ENCODE measurements at regions of chr2 and their contacts with region 1.

Region 1: DNA sequence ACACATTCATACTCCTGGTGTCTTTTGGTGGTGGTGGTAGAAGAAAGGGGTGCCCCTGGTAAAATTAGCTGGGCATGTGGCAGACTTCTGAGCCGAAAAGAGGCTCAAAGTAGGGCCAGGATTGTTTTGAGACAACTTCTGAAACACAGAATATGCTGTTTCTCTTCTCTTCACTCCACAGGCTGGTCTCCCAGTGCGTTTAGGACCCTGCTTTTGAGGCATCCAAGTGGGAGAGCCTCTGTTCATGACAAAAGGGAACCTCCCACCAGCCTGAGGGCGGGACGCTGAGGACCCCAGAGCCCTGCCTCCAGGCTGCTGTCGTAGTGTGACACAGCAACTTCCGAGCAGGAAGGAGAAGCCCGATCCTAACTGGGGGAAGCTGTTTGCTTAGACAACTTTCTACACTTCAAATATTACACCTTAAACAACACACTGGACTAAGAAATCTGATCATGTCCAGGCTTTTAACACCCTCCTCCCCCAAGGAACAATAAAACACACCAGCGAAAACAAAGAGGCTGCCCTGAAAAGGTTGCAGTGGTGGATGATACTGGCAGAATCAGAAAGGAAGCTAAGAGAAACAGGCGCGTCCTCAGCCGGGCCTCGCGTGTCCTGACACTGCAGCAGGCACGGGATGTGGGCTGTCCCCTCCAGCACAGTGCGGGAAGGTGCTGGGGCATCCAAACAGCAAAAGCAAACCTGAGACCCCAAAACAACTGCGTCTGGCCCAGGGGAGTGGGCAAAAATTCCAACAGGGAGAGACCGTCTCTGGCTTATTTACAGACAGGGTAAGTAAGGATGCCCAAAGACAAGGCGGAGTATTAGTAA is 9.3 kb downstream of the SERTAD2 start:
- H3K4me3 ChIP-seq: peak overlapping the region; percentile 33
- H3K27ac ChIP-seq: peak overlapping the region; percentile 86
- H3K4me1 ChIP-seq: peaks cover 41% of the 10 kb centered on the region
- CTCF ChIP-seq: no peak

Region 2: DNA sequence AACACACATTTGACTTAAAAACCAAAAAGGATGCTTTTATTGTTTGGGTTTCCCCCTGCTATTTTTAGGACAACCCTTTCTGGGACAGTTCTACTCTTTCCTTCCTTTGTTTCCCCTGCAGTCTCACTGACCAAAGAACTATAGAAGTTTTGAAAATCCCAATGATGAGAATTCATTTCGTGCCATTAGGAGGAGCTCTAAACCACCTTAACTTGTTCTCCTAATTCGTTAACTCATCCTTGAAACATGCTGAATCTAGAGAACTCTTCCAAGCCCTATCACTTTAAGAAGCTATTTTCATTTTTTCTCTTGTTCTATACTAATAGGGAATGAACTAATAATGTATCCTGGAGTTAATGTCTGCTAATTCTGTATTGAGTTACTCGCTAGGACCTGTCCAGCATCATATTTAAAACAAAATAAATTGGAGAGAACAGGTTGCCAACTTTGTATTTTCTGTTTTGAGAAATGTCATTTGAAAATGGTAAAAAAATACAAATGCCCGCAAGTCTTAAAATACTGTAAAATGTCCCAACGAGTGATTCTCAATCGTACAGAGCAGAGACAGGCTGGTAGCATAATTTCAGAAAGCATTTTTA is 57.4 kb before region 1 on chr2:
- CTCF ChIA-PET with region 1: interaction called, 24 read pairs
- POLR2A ChIA-PET with region 1: no interaction called
- H3K4me3 ChIP-seq: no peak overlapping the region
- H3K27ac ChIP-seq: no peak overlapping the region
- H3K4me1 ChIP-seq: no peaks in the 10 kb centered on the region
- CTCF ChIP-seq: no peak; the same call in 1 of the 2 replicates

Region 3: GRCh38 chr2:64685438-64685837 is 41.0 kb after region 1 on chr2:
- CTCF ChIA-PET with region 1: no interaction called
- POLR2A ChIA-PET with region 1: no interaction called
- H3K4me3 ChIP-seq: no peak overlapping the region
- H3K27ac ChIP-seq: no peak overlapping the region
- H3K4me1 ChIP-seq: no peaks in the 10 kb centered on the region
- CTCF ChIP-seq: no peak

Region 4: DNA sequence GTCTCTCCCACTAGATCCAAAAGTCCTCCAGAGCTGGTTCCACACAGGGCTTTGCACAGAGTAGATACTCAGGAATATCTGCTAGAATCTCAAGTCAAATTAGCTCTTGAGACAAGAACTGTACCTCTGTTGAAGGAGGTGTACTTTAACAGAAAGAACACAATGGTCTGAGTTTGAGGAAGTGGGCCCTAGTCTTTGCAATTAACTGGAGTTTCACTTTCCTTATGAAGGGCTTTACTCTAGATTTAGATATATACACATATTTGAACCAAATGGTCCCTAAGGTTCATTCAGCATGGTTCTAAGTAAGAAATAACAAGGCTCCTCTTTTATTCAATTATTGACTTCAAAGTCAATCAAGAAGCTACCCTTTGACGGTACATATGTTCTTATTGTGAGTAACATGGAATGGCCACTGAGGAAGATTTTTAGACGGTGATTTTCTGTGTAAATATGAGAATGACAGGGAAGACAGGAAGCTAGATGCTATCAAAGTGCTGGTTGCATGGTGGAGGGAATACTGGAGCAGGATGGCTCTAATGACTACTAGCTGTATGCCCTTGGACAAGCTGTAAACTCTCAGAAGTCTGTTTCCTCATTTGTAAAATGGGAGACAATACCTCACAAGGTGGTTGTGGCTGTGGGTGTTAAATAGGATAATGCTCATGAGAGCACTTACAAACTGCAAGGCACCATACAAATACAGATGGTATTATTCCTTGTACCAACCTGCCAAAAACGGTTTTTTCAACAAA is 82.8 kb after region 1 on chr2:
- CTCF ChIA-PET with region 1: interaction called, 14 read pairs
- POLR2A ChIA-PET with region 1: no interaction called
- H3K4me3 ChIP-seq: no peak overlapping the region
- H3K27ac ChIP-seq: no peak overlapping the region
- H3K4me1 ChIP-seq: peaks cover 23% of the 10 kb centered on the region
- CTCF ChIP-seq: no peak

Region 5: DNA sequence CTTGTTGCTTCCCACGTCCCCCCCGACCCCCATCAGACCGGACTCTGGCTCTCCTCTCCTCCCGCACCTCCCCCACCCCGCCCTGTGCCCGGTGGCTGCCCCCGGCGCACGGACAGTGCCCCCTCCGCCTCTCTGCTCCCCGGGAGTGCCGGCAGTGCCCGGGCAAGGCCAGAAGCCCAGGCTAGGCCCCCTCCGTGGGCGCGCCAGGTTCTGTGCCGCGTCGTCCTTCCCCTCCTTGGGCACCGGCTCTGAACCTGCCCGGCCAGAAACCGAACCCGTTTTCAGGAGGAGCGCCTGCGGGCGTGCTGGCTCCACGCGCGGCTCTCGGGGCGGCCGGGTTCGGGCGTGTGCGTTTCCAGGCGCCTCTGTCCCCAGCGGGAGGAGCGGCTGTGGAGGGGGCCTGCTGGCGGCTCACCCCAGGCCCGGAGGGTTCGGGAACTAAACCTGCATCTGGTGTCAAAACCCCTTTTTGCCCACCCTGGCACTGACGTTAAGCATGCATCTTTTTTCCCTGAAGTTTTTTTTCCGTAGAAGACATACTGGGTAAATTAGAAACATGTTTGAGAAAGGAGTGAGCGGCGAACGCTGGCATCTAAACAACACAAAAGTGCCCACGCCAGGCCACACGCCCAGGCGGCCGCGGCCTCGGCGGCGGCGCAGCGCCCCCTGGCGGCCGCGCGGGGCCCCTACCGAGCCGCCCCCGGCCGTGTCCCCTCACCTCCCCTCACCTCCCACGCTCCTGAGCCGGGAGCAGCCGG is 220.9 kb after region 1 on chr2:
- CTCF ChIA-PET with region 1: interaction called, 24 read pairs
- POLR2A ChIA-PET with region 1: no interaction called
- H3K4me3 ChIP-seq: peak overlapping the region; percentile 35
- H3K27ac ChIP-seq: peak overlapping the region; percentile 76
- H3K4me1 ChIP-seq: peaks cover 4% of the 10 kb centered on the region; the same call in 1 of the 2 replicates
- CTCF ChIP-seq: no peak

Region 6: DNA sequence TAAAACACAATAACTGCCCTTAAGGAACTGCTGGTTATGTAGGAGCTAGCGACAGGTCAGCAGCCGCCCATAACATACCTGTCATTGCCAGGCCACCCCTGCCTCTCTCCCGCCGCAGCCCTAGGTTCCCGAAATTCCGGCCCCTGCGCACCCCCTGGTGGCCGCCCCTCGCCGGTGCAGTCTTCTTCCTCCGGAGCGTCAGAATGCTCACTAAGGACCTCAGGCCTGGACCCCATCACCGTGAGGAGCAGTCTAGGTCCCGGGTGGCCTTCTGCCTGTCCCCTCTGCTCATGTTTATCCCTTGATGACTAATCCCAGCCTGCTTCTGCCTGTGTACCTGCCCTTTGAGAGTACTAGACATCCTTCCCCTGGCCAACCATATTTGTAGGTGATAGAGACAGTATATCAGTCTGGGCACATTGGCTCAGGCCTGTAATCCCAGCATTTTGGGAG is 229.1 kb after region 1 on chr2:
- CTCF ChIA-PET with region 1: interaction called, 11 read pairs
- POLR2A ChIA-PET with region 1: no interaction called
- H3K4me3 ChIP-seq: no peak overlapping the region
- H3K27ac ChIP-seq: no peak overlapping the region
- H3K4me1 ChIP-seq: no peaks in the 10 kb centered on the region
- CTCF ChIP-seq: peak; percentile 91

Measured in HEK293 (cell line).